IMR-90 (cell line): ENCODE measurements at regions of chr7 and their contacts with region 1.

Region 1: DNA sequence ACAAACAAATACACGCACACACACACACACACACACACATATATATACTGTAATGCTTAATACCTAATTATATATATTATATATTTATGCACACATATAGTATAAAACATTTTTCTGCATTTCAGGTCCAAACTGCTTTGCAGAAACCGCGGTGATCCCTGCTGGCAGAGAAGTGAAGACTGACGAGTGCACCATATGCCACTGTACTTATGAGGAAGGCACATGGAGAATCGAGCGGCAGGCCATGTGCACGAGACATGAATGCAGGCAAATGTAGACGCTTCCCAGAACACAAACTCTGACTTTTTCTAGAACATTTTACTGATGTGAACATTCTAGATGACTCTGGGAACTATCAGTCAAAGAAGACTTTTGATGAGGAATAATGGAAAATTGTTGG is 138.5 kb downstream of the VWC2 start:
- DNase-seq: no peak
- ATAC-seq: no peak
- H3K4me3 ChIP-seq: no peak overlapping the region
- H3K27ac ChIP-seq: no peak overlapping the region
- H3K4me1 ChIP-seq: no peaks in the 10 kb centered on the region
- H3K27me3 ChIP-seq: no peaks in the 10 kb centered on the region
- CTCF ChIP-seq: no peak
- POLR2A ChIP-seq: no peak
- RAD21 ChIP-seq: no peak

Region 2: DNA sequence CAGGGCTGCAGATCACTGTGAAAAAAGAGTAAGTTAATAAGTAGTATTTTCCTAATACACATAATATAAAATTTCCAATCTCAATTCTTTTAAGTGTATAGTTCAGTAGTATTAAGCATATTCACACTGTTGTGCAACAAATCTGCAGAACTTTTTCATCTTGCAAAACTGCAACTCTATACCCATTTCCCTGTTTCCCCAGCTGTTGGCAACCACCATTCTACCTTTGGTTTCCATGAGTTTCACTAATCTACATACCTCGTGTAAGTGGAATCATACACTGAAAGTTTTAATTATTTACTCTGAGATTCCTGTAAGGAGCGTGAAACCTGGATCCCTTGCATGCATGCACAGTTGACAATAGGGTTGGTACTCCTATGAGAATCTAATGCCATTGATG is 25.7 kb after region 1 on chr7:
- CTCF ChIA-PET with region 1: no interaction called
- POLR2A ChIA-PET with region 1: no interaction called
- dilution Hi-C with region 1: no loop called
- in situ Hi-C with region 1: no loop called
- intact Hi-C with region 1: loop called (anchors 1 kb)
- DNase-seq: no peak
- ATAC-seq: no peak
- H3K4me3 ChIP-seq: no peak overlapping the region
- H3K27ac ChIP-seq: no peak overlapping the region
- H3K4me1 ChIP-seq: no peaks in the 10 kb centered on the region
- H3K27me3 ChIP-seq: no peaks in the 10 kb centered on the region
- CTCF ChIP-seq: no peak
- POLR2A ChIP-seq: no peak
- RAD21 ChIP-seq: no peak